Ascending aorta (tissue), 2 donors: ENCODE measurements at regions of chr13 and their contacts with region 1.

Region 1: DNA sequence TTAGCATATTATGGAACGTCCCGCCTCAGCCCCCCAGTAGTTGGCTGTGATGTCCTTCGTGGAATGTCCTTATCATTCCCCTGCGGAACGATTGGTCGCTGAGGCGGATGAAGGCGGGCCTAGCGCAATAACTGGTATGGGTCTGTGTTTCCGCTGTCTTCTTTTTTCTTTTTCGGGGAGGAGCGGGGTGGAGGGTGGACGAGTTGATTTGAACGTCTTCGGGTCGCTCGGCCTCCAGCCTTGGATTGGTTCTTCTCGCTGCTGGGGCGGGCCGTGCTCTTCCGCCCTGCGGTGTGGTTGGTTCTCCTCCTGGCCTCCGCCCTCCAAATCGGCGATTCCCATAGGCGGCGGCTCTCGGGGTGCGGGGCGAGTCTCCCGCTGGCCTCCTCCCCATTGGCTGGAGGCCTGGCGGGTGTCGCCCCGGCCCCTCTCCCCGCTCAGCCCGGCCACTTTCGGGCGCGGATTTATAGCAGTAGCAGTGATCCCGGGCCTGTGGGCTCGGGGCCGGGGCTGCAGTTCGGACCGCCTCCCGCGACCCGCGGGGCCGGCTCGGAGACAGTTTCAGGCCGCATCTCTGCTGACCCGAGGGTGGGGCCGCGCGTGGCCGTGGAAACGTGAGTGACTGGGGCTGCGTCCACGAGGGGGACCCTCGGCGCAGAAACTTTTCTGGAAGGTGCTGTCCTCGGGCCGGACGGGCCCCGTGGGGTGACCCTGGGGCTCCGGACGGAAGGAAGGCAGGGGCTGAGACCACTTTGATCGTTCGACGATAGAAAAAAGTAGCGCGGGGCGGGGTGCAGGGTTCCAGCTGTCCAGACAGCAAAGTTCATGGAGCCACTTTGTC is 2.1 kb downstream of the ING1 start:
- DNase-seq: peak; percentile 99
- H3K4me3 ChIP-seq: peak overlapping the region; percentile 86 to 90
- H3K27ac ChIP-seq: peak overlapping the region; percentile 98 to 100
- H3K4me1 ChIP-seq: peaks cover 4 to 20% of the 10 kb centered on the region in 2 donors
- H3K27me3 ChIP-seq: no peaks in the 10 kb centered on the region
- CTCF ChIP-seq: peak; percentile 33 to 49 (median 33)

Region 2: GRCh38 chr13:110216398-110217041 is 499.1 kb before region 1 on chr13:
- intact Hi-C with region 1: loop called (anchors 10 kb)
- DNase-seq: peak in 1 of 2 donors; percentile 84
- H3K4me3 ChIP-seq: peak overlapping the region in 1 of 2 donors; percentile 29
- H3K27ac ChIP-seq: peak overlapping the region; percentile 82 to 89
- H3K4me1 ChIP-seq: peaks cover 9 to 51% of the 10 kb centered on the region in 2 donors
- H3K27me3 ChIP-seq: no peaks in the 10 kb centered on the region
- CTCF ChIP-seq: no peak

Region 3: GRCh38 chr13:110561344-110562035 is 154.1 kb before region 1 on chr13 and contains the start of gene RAB20:
- intact Hi-C with region 1: loop called (anchors 2 kb)
- DNase-seq: peak; percentile 48 to 92
- H3K4me3 ChIP-seq: peak within 1 kb of the TSS; percentile 79 to 82
- H3K27ac ChIP-seq: peak within 1 kb of the TSS; percentile 92 to 98
- H3K4me1 ChIP-seq: peaks cover 8 to 13% of the 10 kb centered on the region in 2 donors
- H3K27me3 ChIP-seq: no peaks in the 10 kb centered on the region
- CTCF ChIP-seq: no peak
- total RNA-seq, gene RAB20: 17.7 TPM

Region 4: GRCh38 chr13:110819203-110820014 is 103.8 kb after region 1 on chr13:
- intact Hi-C with region 1: loop called (anchors 2 kb)
- DNase-seq: peak in 1 of 2 donors; percentile 88
- H3K4me3 ChIP-seq: no peak overlapping the region
- H3K27ac ChIP-seq: no peak overlapping the region
- H3K4me1 ChIP-seq: peaks cover 0 to 2% of the 10 kb centered on the region in 2 donors
- H3K27me3 ChIP-seq: no peaks in the 10 kb centered on the region
- CTCF ChIP-seq: peak; percentile 88 to 97 (median 97)

Region 5: GRCh38 chr13:111114362-111115060 is 398.9 kb after region 1 on chr13:
- intact Hi-C with region 1: loop called (anchors 2 kb)
- DNase-seq: peak in 1 of 2 donors; percentile 89
- H3K4me3 ChIP-seq: peak overlapping the region; percentile 80 to 86
- H3K27ac ChIP-seq: peak overlapping the region; percentile 89 to 95
- H3K4me1 ChIP-seq: peaks cover 3 to 25% of the 10 kb centered on the region in 2 donors
- H3K27me3 ChIP-seq: no peaks in the 10 kb centered on the region
- CTCF ChIP-seq: no peak

Region 6: DNA sequence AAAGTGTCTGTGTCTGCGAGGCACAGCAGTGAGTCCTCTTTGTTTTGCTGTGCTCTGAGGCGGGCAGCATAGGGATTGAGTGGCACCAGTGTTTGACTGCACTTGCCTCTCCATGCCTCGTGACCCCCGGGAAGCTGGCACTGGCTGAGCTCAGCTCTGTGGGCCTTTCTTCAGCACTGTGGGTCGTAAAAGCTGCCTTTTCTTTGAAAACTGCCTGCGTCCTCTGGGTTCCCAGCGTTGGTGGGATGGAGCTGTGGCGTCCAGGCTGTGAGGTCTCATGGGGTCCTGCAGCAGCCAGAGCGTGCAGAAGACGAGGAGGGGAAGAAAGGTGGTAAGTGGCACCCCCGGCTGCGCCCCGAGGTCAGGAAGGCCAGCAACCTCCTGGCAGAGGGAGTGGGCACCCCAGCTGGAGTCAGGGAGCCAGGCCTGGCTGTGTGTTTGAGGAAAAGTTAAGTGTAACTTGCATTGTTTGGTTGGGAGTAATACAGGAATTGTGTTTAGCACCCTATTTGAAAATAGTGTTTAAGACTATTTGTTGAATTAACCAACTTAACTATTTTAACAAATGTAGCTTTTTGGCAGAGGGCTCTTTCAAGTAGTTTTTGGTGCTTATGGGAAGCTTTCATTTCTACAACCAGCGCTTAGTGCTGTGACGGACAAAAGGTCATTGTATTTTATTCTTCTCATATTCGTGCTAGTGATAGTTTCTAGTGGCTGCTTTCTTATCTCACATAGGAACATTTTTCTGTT is 525.6 kb after region 1 on chr13:
- intact Hi-C with region 1: no loop called
- DNase-seq: no peak
- H3K4me3 ChIP-seq: no peak overlapping the region
- H3K27ac ChIP-seq: no peak overlapping the region
- H3K4me1 ChIP-seq: no peaks in the 10 kb centered on the region
- H3K27me3 ChIP-seq: no peaks in the 10 kb centered on the region
- CTCF ChIP-seq: no peak